ENCODE measurements at regions of chr3 and their contacts with region 1.

Region 1: GRCh38 chr3:134754768-134755559 is 40.1 kb upstream of the EPHB1 start:
- DNase-seq: peak in 1 of 2 donors; percentile 45
- ATAC-seq: peak; percentile 55 to 75
- H3K4me3 ChIP-seq: no peak overlapping the region
- H3K27ac ChIP-seq: no peak overlapping the region
- H3K4me1 ChIP-seq: peaks cover 12 to 18% of the 10 kb centered on the region in 2 donors
- H3K27me3 ChIP-seq: no peaks in the 10 kb centered on the region
- CTCF ChIP-seq: peak; percentile 61 to 74 (median 71)
- POLR2A ChIP-seq: no peak

Region 2: GRCh38 chr3:134697830-134698689 is 56.9 kb before region 1 on chr3:
- in situ Hi-C with region 1: no loop called
- intact Hi-C with region 1: loop called (anchors 10 kb)
- DNase-seq: no peak
- ATAC-seq: peak; percentile 62 to 63
- H3K4me3 ChIP-seq: no peak overlapping the region
- H3K27ac ChIP-seq: peak overlapping the region in 1 of 4 donors; percentile 68
- H3K4me1 ChIP-seq: peaks cover 18 to 26% of the 10 kb centered on the region in 2 donors
- H3K27me3 ChIP-seq: no peaks in the 10 kb centered on the region
- CTCF ChIP-seq: no peak
- POLR2A ChIP-seq: no peak

Region 3: DNA sequence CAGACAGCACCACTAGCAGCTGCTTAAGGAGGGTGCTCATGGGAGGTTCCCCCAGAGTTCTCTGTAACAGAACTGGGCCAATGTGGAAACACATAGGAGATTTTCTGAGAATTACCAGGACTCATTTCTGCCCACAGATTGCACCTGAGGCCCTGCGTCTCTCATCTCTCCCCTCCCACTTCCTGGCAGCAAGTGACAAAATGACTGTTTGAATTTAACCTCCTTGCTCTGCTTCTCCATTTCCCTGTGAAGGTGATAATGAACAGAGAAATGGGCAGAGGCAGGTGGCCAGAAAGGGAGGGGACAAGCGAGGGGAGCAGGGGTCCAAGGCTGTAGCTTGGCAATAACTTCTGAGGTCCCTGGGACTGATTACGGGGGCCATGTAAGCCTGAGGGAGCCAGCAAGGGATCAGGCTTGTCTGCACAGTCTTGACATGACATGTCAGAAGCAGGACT is 48.1 kb after region 1 on chr3:
- in situ Hi-C with region 1: no loop called
- intact Hi-C with region 1: no loop called
- DNase-seq: no peak
- ATAC-seq: no peak
- H3K4me3 ChIP-seq: no peak overlapping the region
- H3K27ac ChIP-seq: no peak overlapping the region
- H3K4me1 ChIP-seq: peaks cover 23 to 28% of the 10 kb centered on the region in 2 donors
- H3K27me3 ChIP-seq: no peaks in the 10 kb centered on the region
- CTCF ChIP-seq: no peak
- POLR2A ChIP-seq: no peak

Measured in gastrocnemius medialis (tissue), 4 donors.